ENCODE measurements at regions of chr7 and their contacts with region 1.

Region 1: DNA sequence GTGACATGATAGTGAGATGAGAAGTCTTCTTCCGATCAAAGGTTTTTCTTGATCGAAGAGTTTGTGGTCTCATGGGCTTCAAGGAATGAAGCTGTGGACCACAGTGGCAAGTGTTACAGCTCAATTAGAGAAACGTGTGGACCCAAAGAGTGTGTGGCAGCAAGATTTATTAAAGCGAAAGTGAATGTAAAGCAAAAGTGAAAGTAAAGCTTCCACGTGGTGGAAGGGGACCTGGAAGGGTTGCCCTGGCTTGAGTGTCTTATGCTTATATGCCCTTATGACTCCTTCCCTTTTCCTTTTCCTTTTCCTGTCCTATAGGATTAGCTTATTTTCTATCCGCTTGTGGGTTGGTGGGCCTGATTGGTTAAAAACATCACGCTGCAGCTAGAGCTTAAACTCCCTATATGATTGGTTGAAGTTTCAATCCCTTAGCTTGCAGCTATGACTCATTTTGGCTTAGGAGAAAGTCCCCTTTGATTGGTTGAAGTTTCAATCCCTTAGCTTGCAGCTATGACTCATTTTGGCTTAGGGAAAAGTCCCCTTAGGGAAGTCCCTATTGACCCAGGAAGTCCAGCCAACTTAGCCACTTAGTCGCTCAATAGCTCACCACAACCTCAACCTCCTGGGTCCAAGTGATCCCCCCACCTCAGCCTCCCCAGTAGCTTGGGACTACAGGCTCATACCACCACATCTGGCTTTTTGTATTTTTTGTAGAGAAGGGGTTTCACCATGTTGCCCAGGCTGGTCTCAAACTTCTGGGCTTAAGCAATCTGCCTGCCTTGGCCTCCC is 34.7 kb downstream of the MRPS24 start:
- DNase-seq: peak; percentile 19
- H3K4me3 ChIP-seq: peak overlapping the region; percentile 30
- H3K27ac ChIP-seq: no peak overlapping the region
- H3K4me1 ChIP-seq: no peaks in the 10 kb centered on the region
- H3K27me3 ChIP-seq: no peaks in the 10 kb centered on the region
- CTCF ChIP-seq: no peak

Region 2: DNA sequence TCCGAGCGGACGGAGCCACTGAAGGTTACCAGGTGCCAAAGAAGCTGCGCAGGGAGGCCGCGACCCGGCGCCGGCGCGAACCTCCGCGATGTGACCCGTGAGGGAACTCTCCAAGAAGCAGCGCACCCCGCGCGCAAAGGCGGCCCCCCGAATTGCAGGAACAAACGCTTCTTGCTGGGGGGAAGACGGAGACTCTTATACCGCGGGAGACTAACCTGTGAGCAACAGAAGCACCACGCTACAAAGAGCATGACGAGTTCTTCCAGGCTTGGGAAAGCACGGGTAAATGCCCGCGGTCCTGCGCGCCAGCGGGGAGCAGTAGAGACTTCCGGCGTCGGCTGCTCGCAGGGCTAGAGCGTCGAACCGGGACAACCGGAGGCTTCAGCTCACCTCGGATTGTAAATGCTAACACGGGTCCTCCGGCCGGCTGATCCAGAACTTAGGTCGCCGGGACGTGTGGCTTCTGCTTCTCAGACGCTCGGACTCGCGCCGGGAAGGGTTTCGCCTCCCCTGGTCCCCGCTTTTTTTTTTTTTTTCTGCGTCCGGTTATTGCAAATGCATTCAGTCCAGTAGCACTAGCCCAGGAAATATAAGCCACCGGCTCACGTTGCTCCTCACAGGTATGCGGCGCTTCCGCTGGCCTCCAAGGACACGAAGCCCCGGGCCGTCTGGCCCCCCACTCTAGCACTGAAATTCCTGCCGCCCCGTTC is 105.3 kb before region 1 on chr7 and contains the start of gene COA1:
- CTCF ChIA-PET with region 1: no interaction called
- POLR2A ChIA-PET with region 1: no interaction called
- intact Hi-C with region 1: loop called (anchors 5 kb)
- DNase-seq: peak; percentile 92
- H3K4me3 ChIP-seq: peak within 1 kb of the TSS; percentile 58
- H3K27ac ChIP-seq: peak within 1 kb of the TSS; percentile 72
- H3K4me1 ChIP-seq: no peaks in the 10 kb centered on the region
- H3K27me3 ChIP-seq: no peaks in the 10 kb centered on the region
- CTCF ChIP-seq: no peak
- total RNA-seq, gene COA1: 105 and 115 TPM in 2 replicates

Measured in A673 (cell line).